ENCODE measurements at regions of chr2 and their contacts with region 1.

Region 1: DNA sequence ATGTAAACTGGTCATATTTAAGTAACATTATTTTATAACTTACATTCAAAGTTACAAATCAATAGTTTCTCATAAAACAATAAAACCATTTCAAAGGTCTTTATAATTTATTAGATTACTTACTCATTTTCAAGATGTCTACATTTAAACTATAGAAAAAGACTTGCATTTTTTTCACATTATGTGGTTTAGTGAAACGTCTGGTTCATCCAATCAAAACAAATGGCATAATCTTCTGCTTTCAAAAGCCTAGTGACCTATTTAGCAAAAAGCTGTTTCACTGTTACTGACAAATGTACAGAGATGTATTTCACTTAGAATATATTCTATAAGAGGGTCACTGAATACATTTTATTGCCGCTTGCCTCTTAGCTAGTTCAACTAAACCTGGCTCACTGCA is 49.3 kb upstream of the MCM6 start:
- DNase-seq: no peak

Region 2: DNA sequence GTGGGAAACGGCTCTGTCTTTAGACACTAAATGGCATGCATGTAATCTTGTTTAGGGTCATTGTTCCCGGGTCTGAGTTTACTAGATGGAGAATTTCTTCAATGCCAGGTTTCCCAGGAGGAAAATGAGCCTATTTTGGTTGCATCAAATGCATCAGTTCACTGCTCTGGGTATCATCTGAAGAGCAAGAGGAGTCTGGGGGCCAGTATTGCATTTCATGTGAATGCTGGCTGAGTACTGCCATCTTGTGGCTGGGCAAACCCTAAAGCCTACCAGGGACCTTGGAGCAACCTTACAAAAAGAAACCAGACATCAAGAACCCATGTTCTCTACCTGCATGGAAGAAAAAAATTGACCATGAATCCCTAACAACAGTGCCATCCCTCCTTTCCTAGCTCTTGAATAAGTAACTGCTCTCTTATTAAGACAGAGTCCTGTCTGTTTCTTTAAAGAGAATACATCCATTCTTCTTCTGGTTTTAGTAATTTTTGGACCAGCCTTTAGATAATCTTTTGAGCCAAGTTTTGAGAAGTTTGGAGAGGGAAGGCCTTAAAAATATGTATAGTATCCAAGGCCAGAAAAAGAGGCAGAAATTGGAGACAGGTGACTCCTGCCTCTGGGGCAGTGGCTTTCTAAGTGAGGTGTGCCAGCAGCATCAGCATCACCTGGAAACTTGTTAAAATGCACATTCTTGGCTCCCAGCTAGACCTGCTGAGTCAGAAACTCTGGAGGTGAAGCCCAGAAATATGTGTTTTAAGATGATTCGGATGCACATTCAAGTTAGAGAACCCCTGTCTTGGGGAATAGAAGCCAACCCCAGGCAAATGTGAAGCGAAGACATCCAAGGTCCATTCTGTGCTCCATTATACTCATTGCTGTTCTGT is 453.4 kb after region 1 on chr2:
- intact Hi-C with region 1: loop called in 1 of 2 experiments (anchors 10 kb)
- DNase-seq: no peak

Measured in posterior vena cava (tissue), 2 donors.